ENCODE measurements at regions of chr16 and their contacts with region 1.

Region 1: GRCh38 chr16:78122774-78123315 is 23.4 kb downstream of the WWOX start:
- DNase-seq: peak in 1 of 2 donors; percentile 69
- H3K4me3 ChIP-seq: peak overlapping the region in 1 of 2 donors; percentile 41
- H3K27ac ChIP-seq: peak overlapping the region in 1 of 2 donors; percentile 42
- H3K4me1 ChIP-seq: peaks cover 0 to 4% of the 10 kb centered on the region in 2 donors
- H3K27me3 ChIP-seq: no peaks in the 10 kb centered on the region
- CTCF ChIP-seq: peak; percentile 43 to 58 (median 44)

Region 2: DNA sequence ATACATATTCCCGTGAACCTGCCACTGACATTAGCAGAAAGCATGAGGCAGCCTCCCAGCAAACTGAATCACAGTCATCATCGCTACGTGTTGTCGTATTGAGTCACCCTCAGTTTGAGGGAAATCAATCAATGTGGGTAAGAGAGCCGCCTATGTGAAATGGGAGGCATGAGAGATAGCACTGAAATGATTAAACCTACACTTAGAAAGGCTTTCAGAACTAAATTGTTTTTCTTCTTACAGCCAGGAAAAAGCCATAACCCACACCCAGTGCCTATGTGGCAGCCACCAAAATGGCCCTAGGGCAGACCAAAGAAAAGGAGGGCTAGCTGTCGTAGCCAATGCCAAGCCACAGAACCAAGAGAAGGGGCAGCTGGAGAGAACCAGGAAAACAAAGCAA is 778.5 kb before region 1 on chr16:
- intact Hi-C with region 1: no loop called
- DNase-seq: no peak
- H3K4me3 ChIP-seq: no peak overlapping the region
- H3K27ac ChIP-seq: no peak overlapping the region
- H3K4me1 ChIP-seq: no peaks in the 10 kb centered on the region
- H3K27me3 ChIP-seq: no peaks in the 10 kb centered on the region
- CTCF ChIP-seq: no peak

Region 3: GRCh38 chr16:78235168-78235800 is 112.4 kb after region 1 on chr16:
- intact Hi-C with region 1: loop called (anchors 1 kb)
- DNase-seq: peak; percentile 21 to 79
- H3K4me3 ChIP-seq: no peak overlapping the region
- H3K27ac ChIP-seq: no peak overlapping the region
- H3K4me1 ChIP-seq: no peaks in the 10 kb centered on the region
- H3K27me3 ChIP-seq: no peaks in the 10 kb centered on the region
- CTCF ChIP-seq: peak; percentile 69 to 87 (median 86)

Region 4: DNA sequence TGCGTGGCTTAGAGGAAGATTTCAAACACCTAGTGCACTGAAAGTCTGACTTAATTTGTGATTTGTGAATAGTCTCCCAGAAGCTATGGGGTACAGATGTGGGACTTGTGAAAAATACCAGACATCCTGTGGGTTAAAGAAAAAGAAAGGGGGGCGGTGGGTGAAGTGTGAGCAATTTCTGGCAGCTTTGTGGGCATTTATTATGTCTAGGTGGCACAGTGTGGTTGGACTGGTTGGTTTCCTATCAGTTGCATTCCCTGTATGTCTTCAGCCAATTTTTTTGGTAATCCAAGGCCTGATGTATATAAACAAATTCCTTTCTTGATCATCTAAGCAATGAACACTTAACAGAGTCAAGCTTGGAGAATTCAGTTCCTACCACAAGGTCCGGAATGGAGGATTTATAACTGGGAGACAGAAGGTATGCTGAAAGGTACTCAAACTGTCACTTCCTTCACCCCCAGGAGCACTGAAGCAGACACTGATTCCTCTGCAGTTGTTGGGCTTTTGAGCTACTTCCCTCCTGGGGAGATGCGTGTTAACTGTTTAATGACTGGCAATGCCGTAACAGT is 188.2 kb after region 1 on chr16:
- intact Hi-C with region 1: no loop called
- DNase-seq: no peak
- H3K4me3 ChIP-seq: no peak overlapping the region
- H3K27ac ChIP-seq: no peak overlapping the region
- H3K4me1 ChIP-seq: no peaks in the 10 kb centered on the region
- H3K27me3 ChIP-seq: no peaks in the 10 kb centered on the region
- CTCF ChIP-seq: no peak

Region 5: DNA sequence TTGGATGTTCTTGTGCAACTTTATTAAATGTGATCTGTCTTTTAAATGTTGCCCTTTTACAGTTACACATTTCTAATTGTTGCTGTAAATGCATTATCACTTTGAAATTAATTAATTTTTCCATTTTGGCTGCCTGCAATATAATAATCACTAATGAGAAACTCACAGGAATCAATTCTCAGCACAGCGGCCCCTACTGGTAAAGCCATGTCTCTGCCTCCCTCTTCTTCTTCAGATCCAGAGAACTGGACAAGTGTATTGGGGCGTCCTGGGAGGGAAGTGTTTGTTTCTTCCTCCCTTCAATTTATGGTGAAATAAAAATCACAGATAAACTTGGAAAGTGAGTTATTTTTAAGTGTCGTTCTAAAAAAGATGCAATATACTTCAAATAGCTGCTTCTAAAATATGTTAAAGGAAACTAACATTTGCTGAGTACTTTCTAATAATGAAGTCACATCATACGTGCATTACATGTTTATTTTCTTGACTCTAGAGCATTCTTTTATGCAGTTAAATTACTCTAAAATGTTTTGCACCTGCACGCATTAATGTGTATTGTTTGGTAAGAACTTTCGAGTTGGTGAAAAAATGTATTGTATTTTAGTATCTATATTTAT is 314.6 kb after region 1 on chr16:
- intact Hi-C with region 1: loop called (anchors 5 kb)
- DNase-seq: no peak
- H3K4me3 ChIP-seq: no peak overlapping the region
- H3K27ac ChIP-seq: no peak overlapping the region
- H3K4me1 ChIP-seq: no peaks in the 10 kb centered on the region
- H3K27me3 ChIP-seq: no peaks in the 10 kb centered on the region
- CTCF ChIP-seq: peak in 2 of 3 experiments; percentile 79 to 81